ENCODE measurements at regions of chr14 and their contacts with region 1.

Region 1: GRCh38 chr14:87896393-87897380 is 96.3 kb downstream of the GALC start:
- DNase-seq: no peak
- H3K4me3 Mint-ChIP-seq: no peak overlapping the region
- H3K27ac Mint-ChIP-seq: no peak overlapping the region
- H3K4me1 Mint-ChIP-seq: no peaks in the 10 kb centered on the region
- H3K27me3 Mint-ChIP-seq: peaks cover 13% of the 10 kb centered on the region

Region 2: DNA sequence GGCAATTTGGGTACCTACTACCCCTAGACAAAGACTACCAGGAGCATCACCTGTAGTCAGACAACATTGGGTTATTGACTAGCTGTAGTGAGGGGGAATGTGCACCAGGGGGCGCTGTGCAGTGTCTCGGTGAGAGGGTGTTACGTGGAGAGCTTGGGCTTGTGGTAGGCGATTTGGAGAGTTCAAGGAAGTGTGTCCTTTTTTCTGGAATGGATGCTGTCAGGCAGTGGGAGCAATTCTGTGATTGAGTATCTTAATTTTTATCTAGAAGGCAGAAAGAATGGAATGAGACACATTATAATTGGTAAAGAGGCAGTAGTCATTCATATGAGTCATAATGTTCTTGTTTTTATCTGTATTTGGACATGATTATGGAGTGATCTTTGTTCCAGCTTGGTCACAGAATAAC is 91.4 kb before region 1 on chr14:
- CTCF ChIA-PET with region 1: interaction called, 17 read pairs
- POLR2A ChIA-PET with region 1: no interaction called
- DNase-seq: peak; percentile 61
- H3K4me3 Mint-ChIP-seq: no peak overlapping the region
- H3K27ac Mint-ChIP-seq: no peak overlapping the region
- H3K4me1 Mint-ChIP-seq: no peaks in the 10 kb centered on the region
- H3K27me3 Mint-ChIP-seq: no peaks in the 10 kb centered on the region

Region 3: GRCh38 chr14:88023658-88024187 is 127.0 kb after region 1 on chr14:
- CTCF ChIA-PET with region 1: no interaction called
- POLR2A ChIA-PET with region 1: no interaction called
- DNase-seq: no peak
- H3K4me3 Mint-ChIP-seq: no peak overlapping the region
- H3K27ac Mint-ChIP-seq: peak overlapping the region; percentile 38
- H3K4me1 Mint-ChIP-seq: peaks cover 49% of the 10 kb centered on the region
- H3K27me3 Mint-ChIP-seq: no peaks in the 10 kb centered on the region

Measured in activated CD4-positive, alpha-beta memory T cell treated with anti-CD3 and anti-CD28 coated beads, Interleukin-2, amount 10 ng/mL, durations not matched to agents 7 days and 5 days (primary cell).